ENCODE measurements at regions of chr15 and their contacts with region 1.

Region 1: DNA sequence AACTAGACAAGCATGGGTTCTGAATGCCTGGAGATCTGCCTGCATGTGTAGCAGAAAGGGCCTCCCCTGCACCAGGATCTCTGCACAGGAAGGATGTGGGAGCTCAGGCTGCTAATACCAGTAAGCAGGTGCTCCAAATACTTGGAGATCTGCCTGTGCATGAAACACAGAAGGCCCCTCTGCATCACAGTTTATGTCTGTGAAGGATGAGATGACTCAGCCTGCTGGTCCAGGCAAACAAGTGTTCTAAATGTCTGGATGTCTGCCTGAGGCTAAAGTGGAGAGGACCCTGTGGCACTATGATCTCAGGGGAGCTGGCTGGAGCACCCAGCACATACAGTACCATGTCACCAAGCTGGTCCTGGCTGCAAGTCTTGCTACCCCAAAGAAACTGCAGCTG is 678.8 kb downstream of the MCTP2 start:
- DNase-seq: no peak
- ATAC-seq: no peak
- H3K4me3 ChIP-seq: no peak overlapping the region
- H3K4me3 Mint-ChIP-seq: no peak overlapping the region
- H3K27ac ChIP-seq: no peak overlapping the region
- H3K27ac Mint-ChIP-seq: no peak overlapping the region
- H3K4me1 ChIP-seq: no peaks in the 10 kb centered on the region
- H3K4me1 Mint-ChIP-seq: no peaks in the 10 kb centered on the region
- H3K27me3 ChIP-seq: no peaks in the 10 kb centered on the region
- H3K27me3 Mint-ChIP-seq: peaks cover 0 to 4% (median 0%) of the 10 kb centered on the region in 5 donors

Region 2: DNA sequence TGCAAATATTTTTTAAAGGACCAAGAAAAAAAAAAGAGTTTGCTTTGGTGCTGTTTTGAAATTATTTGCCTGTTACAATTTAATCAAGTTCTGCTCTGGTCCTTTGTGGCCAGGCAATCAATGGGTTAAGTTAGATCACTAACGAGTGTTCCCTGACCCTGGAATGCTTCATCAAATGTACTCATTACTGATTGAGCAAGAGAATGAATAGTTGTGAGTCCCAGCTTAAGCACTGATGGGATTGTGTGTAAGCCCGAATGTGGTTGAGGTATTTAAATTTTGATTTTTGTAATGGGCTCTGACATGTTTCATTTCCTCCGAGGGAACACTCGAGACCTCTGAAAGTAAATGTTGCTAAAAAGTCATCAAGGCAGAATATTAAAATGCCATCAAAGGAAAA is 20.3 kb after region 1 on chr15:
- CTCF ChIA-PET with region 1: no interaction called
- POLR2A ChIA-PET with region 1: no interaction called
- intact Hi-C with region 1: loop called in 1 of 2 experiments (anchors 2 kb)
- DNase-seq: no peak
- ATAC-seq: no peak
- H3K4me3 ChIP-seq: no peak overlapping the region
- H3K4me3 Mint-ChIP-seq: no peak overlapping the region
- H3K27ac ChIP-seq: no peak overlapping the region
- H3K27ac Mint-ChIP-seq: no peak overlapping the region
- H3K4me1 ChIP-seq: no peaks in the 10 kb centered on the region
- H3K4me1 Mint-ChIP-seq: no peaks in the 10 kb centered on the region
- H3K27me3 ChIP-seq: no peaks in the 10 kb centered on the region
- H3K27me3 Mint-ChIP-seq: peaks cover 0 to 18% (median 11%) of the 10 kb centered on the region in 5 donors